Lower lobe of right lung (tissue), 2 donors: ENCODE measurements at regions of chr12 and their contacts with region 1.

Region 1: GRCh38 chr12:51980051-51980808 is 26.5 kb upstream of the TAMALIN start:
- DNase-seq: peak; percentile 83
- ATAC-seq: peak; percentile 83 to 92
- H3K4me3 ChIP-seq: no peak overlapping the region
- H3K27ac ChIP-seq: no peak overlapping the region
- H3K4me1 ChIP-seq: peaks cover 40% of the 10 kb centered on the region
- H3K27me3 ChIP-seq: no peaks in the 10 kb centered on the region
- CTCF ChIP-seq: peak; percentile 97

Region 2: GRCh38 chr12:51911788-51912711 is 68.2 kb before region 1 on chr12:
- intact Hi-C with region 1: loop called (anchors 10 kb)
- DNase-seq: peak; percentile 75
- ATAC-seq: peak; percentile 71 to 79
- H3K4me3 ChIP-seq: peak overlapping the region; percentile 65
- H3K27ac ChIP-seq: peak overlapping the region; percentile 92
- H3K4me1 ChIP-seq: peaks cover 87% of the 10 kb centered on the region
- H3K27me3 ChIP-seq: peaks cover 12% of the 10 kb centered on the region
- CTCF ChIP-seq: no peak

Region 3: GRCh38 chr12:52091869-52092268 is 111.6 kb after region 1 on chr12:
- intact Hi-C with region 1: no loop called
- DNase-seq: no peak
- ATAC-seq: peak; percentile 63 to 82
- H3K4me3 ChIP-seq: no peak overlapping the region
- H3K27ac ChIP-seq: no peak overlapping the region
- H3K4me1 ChIP-seq: no peaks in the 10 kb centered on the region
- H3K27me3 ChIP-seq: peaks cover 5% of the 10 kb centered on the region
- CTCF ChIP-seq: no peak